ENCODE measurements at regions of chr12 and their contacts with region 1.

Region 1: DNA sequence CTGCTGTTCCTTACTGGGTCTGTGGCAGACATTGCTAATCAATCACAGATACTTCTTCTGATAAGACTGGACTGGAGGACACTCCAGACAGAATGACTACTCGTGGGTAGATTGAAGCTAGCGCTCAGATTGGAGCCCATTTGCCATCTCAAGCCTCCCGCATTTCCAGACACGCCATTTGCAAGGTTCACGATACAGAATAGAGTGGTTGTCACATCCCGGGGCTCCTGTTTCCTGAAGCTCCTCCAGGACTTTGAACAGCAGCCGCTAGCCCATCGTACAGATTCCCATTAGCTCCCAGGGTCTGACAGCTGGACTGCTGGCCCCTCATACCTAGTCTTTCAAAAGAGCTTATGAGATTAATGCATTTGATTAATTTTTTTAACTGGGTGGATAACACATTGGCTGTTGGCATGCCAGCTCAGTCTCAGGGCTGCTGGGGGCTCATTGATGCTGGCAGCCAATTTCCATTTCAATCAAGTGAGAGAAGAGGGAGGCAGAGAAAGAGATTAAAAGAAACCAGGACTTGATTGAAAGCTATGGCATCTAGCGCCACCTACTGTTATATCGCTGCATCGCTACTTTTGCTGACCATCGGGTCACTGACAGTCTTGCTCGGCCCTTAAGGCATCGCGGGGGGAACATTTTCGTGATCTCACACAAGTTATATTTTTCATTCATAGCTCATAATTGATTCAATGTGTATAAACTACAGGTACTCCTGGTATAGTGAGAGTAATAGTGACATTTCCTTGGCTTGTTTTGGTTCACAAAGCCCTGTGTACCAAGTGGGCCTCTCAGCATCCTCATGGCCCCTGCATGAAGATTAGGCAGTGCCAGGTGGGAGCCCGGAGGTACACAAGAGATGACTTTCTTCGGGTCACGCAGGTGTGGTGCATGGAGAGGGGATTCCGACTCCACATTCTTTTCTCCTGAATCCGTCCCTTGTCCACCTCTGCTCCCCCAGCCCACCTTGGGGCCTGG is 78.6 kb downstream of the CCDC60 start:
- DNase-seq: peak in 1 of 2 donors; percentile 62
- ATAC-seq: peak; percentile 72
- H3K4me3 ChIP-seq: no peak overlapping the region
- H3K27ac ChIP-seq: no peak overlapping the region
- H3K4me1 ChIP-seq: no peaks in the 10 kb centered on the region
- H3K27me3 ChIP-seq: peaks cover 0 to 2% of the 10 kb centered on the region in 2 donors

Region 2: GRCh38 chr12:118979763-118980406 is 433.2 kb before region 1 on chr12:
- intact Hi-C with region 1: loop called (anchors 5 kb)
- DNase-seq: peak in 1 of 2 donors; percentile 45
- ATAC-seq: no peak
- H3K4me3 ChIP-seq: no peak overlapping the region
- H3K27ac ChIP-seq: no peak overlapping the region
- H3K4me1 ChIP-seq: no peaks in the 10 kb centered on the region
- H3K27me3 ChIP-seq: no peaks in the 10 kb centered on the region

Region 3: DNA sequence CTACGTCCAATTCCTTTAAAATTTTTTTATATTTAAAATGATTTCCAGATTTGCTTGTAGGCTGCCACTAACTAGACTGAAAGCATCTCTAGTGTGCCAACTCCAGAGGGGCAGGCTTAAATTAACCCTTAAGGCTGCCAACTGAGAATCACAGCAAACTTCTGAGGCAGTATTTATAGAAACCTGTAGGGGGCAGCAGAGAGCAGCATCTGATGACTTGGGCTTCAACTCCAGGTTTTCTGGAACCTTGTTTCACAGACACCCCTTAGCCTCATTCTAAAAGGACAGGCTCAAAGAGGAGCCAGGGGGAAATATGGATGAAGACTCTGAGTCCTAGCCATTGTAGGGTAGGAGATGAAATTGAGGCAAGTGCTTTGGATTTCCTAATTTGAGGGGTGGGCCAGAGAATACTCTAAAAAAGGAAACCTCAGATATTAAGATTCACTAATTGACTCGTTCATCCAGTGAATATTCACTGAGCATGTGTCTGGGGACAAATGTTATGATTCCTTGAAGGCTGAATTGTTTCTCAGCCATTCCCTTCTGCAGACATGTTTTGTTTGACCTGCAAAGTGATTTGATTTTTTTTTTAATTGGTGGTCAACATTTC is 297.7 kb before region 1 on chr12:
- intact Hi-C with region 1: loop called (anchors 1 to 2 kb)
- DNase-seq: no peak
- ATAC-seq: peak; percentile 56
- H3K4me3 ChIP-seq: no peak overlapping the region
- H3K27ac ChIP-seq: no peak overlapping the region
- H3K4me1 ChIP-seq: no peaks in the 10 kb centered on the region
- H3K27me3 ChIP-seq: no peaks in the 10 kb centered on the region

Region 4: GRCh38 chr12:119211884-119212283 is 201.2 kb before region 1 on chr12:
- intact Hi-C with region 1: loop called in 1 of 2 experiments (anchors 10 kb)
- DNase-seq: no peak
- ATAC-seq: no peak
- H3K4me3 ChIP-seq: no peak overlapping the region
- H3K27ac ChIP-seq: no peak overlapping the region
- H3K4me1 ChIP-seq: no peaks in the 10 kb centered on the region
- H3K27me3 ChIP-seq: no peaks in the 10 kb centered on the region

Region 5: GRCh38 chr12:119288576-119288975 is 124.5 kb before region 1 on chr12:
- intact Hi-C with region 1: no loop called
- DNase-seq: no peak
- ATAC-seq: no peak
- H3K4me3 ChIP-seq: no peak overlapping the region
- H3K27ac ChIP-seq: no peak overlapping the region
- H3K4me1 ChIP-seq: no peaks in the 10 kb centered on the region
- H3K27me3 ChIP-seq: no peaks in the 10 kb centered on the region

Region 6: DNA sequence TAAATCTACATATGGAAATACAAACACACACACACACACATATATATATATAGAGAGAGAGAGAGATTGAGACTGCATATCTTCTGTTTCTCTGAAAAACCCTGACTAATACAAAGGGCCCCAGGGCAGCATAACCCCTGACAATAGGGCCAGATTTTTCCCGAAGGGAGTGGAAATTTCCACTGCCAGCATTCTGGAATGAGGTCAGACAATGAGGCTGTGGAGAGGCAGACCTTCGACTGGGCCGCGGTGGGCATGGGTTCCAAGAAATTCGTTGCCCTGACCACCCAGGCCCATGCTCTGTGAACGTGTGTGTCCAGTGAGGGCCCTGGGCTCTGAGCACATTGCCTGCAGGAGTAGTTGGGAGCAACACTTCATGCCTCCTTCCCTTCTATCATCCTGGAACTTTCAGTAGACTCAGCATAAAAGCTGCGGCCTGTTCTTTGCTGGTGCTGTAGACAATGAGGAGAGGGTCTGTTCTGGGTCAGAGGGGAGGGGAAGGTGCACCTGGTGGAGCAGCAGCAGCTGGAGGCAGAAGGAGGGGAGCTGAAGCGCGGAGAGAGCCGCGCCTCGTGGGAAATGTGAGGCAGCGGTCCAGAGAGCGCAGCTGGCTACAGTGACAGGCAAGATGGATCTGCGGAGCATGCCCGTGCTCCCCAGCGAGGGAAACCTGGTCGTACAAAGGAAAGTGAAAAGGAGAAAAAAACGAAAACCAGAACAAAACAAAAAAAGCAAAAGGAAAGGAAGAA is 104.2 kb before region 1 on chr12:
- intact Hi-C with region 1: no loop called
- DNase-seq: no peak
- ATAC-seq: no peak
- H3K4me3 ChIP-seq: no peak overlapping the region
- H3K27ac ChIP-seq: no peak overlapping the region
- H3K4me1 ChIP-seq: no peaks in the 10 kb centered on the region
- H3K27me3 ChIP-seq: no peaks in the 10 kb centered on the region

Measured in aorta (tissue), 5 donors.